ENCODE measurements at regions of chr20 and their contacts with region 1.

Region 1: DNA sequence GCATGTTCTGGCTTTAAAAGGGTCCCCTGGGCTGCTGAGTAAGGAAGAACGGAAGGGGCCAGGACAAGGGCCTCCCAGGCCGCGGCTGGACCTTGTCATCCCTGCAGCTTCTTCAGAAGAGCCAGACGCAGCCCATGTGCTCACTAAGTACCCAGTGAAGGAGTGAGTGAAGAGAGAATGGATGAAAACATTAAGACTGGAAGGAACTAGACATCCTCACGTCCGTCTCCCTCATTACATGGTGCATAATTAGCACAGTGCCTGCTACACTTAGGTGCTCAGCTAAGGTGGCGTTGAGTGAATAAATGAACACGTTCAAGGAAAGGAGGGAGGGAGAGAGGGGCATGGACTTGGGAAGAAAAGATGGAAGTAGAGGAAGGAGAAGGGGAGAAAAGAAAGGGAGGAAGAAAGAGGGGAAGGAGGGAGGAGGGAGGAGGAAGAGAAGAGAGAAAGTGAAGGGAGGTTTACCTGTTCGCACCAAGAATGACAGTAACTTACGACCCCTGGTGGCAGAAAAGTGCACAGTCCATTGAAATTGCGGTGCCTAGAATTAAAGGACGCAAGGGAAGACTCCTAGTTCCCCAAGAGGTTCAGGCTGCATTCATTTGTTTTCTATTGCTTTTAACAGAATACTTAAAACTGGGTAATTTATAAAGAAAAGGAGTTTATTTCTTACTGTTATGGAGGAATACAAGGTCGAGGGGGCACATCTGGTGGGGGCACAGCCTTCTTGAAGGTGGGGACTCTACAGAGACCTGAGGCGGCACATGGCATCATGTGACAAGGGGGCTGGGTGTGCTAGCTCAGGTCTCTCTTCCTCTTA is 8.0 kb downstream of the TP53RK start:
- DNase-seq: peak; percentile 67
- H3K4me3 ChIP-seq: no peak overlapping the region
- H3K27ac ChIP-seq: no peak overlapping the region
- H3K4me1 ChIP-seq: peaks cover 6% of the 10 kb centered on the region
- CTCF ChIP-seq: peak; percentile 91

Region 2: DNA sequence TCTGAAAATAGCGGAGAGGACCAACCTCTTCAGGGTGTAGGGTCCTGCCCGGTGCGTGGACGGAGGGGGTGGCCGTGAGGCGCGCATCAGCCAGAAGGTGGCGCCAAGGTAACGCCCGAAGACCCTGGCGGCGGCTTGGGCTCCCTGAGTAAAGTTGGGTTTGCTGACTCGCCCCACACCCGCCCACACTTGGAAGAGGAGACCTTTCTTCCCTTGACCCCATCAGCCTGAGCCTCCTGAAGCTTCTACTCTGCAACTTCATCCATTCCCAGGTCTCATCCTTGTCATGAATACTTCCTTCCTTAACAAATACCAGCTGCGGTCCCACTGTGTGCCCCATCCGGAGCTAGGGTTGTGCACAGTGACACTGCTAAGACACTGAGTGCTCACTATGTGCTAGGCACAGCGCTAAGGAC is 548.5 kb before region 1 on chr20:
- CTCF ChIA-PET with region 1: no interaction called
- POLR2A ChIA-PET with region 1: no interaction called
- intact Hi-C with region 1: loop called (anchors 5 kb)
- DNase-seq: peak; percentile 74
- H3K4me3 ChIP-seq: no peak overlapping the region
- H3K27ac ChIP-seq: no peak overlapping the region
- H3K4me1 ChIP-seq: no peaks in the 10 kb centered on the region
- CTCF ChIP-seq: peak; percentile 88

Region 3: DNA sequence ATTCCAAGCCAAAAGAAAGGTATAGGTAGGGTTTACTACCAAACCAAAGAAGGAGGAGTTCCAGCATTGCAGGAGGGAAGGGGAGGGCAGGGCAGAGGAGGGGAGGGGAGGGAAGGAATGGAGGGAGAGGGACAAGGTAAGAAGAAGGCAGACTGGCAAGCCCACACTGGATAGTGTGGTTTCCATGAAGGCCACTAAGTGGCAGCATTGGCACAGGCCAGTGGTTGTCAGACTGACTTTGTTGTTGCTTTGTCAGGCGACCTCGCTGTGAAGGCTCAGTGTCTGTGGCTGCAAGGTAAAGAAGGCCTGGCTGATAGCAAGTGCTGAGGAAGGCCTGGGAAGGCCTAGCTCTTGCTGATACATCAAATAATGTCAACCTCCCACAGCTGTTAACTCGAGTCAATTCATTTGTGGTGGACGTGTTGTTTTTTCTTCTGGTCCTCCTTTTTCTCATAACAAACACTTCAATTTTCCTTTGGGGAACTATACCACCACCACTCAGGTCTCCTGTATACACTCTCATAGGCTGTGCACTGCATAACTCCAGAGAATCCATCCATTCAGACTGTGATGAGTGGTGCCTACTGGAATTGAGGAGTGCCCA is 160.2 kb before region 1 on chr20:
- CTCF ChIA-PET with region 1: no interaction called
- POLR2A ChIA-PET with region 1: no interaction called
- intact Hi-C with region 1: loop called (anchors 1 kb)
- DNase-seq: peak; percentile 49
- H3K4me3 ChIP-seq: no peak overlapping the region
- H3K27ac ChIP-seq: no peak overlapping the region
- H3K4me1 ChIP-seq: no peaks in the 10 kb centered on the region
- CTCF ChIP-seq: peak; percentile 68